ENCODE measurements at regions of chrX and their contacts with region 1.

Region 1: GRCh38 chrX:8447368-8447767 is 17.3 kb upstream of the VCX3B start:
- DNase-seq: no peak
- H3K4me3 ChIP-seq: no peak overlapping the region
- H3K27ac ChIP-seq: no peak overlapping the region
- H3K4me1 ChIP-seq: no peaks in the 10 kb centered on the region
- H3K27me3 ChIP-seq: no peaks in the 10 kb centered on the region
- CTCF ChIP-seq: no peak
- POLR2A ChIP-seq: no peak

Region 2: DNA sequence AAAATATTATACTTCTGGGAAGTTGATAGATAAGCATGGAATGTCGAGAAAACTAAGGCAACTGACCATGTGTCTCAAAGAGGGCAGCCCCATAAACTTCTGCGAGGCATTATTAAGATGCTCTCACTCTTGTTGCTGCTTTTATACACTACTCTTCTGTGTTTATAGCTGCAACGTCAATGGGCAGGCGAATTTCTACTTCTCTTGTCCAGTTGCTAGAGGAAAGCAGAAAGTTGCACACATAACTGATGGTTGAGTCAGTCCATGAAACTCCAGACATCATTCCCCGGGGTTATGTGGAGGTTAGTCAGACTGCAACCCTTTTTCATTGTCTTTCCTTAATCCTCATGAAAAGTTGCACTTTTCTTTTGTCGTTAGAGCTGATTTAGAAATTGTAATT is 57.1 kb after region 1 on chrX:
- intact Hi-C with region 1: no loop called
- DNase-seq: no peak
- H3K4me3 ChIP-seq: no peak overlapping the region
- H3K27ac ChIP-seq: no peak overlapping the region
- H3K4me1 ChIP-seq: no peaks in the 10 kb centered on the region
- H3K27me3 ChIP-seq: no peaks in the 10 kb centered on the region
- CTCF ChIP-seq: no peak
- POLR2A ChIP-seq: no peak

Region 3: DNA sequence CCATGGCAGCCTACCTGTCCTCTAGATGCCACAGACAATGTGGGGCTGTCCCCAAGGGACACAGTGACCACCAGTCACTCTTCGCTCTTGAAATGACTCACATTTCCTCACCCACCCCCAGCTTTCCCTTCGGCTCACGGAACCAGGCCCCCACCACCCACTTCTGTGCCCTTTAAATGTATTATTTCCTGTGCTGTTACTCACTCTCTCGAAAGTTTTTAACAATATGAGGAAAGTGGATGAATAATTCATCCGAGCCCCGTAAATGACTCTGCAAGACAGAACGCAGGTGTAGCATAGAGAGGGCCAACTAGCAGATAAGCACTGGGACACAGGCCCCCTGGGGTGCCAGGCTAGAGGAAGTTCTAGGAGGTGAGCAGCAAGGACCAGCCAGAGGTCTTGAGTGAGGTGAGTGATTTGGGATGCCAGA is 838.0 kb after region 1 on chrX:
- intact Hi-C with region 1: loop called (anchors 10 kb)
- DNase-seq: no peak
- H3K4me3 ChIP-seq: no peak overlapping the region
- H3K27ac ChIP-seq: no peak overlapping the region
- H3K4me1 ChIP-seq: no peaks in the 10 kb centered on the region
- H3K27me3 ChIP-seq: peaks cover 0 to 14% of the 10 kb centered on the region in 2 donors
- CTCF ChIP-seq: no peak
- POLR2A ChIP-seq: no peak

Measured in breast epithelium (tissue), 4 donors.